Activated B cell treated with CpG ODN at 0.5 μM for 24 hours (primary cell): ENCODE measurements at regions of chr10 and their contacts with region 1.

Region 1: DNA sequence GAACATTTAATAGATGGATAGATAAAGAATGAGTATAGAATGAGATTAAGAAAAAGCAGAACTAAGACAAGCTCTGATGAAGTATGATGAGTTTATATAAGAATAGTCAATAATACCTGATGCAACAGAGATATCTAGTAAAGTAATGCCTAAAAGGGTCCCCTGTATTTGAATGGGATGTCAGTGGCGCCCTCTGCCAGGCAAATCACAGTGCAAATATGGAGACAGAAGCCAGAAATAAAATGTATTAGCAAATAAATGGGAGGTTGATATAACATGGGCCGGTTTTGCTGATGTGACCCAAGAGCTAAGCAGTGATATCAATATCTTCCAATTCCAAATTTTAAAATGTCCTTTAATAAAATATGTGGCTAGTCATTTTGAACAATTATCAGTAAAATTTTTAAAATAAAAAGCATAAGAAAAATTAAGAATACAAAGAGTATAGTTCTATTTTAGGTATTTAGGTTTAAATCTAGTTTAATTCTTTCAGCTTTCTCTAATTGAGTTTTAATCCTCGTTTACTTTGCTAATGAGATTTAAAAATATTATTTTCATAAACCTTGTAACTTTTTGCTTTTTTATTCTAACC is 62.6 kb downstream of the ADK start:
- DNase-seq: no peak
- ATAC-seq: peak; percentile 77
- H3K4me3 Mint-ChIP-seq: no peak overlapping the region
- H3K27ac Mint-ChIP-seq: peak overlapping the region; percentile 67
- H3K4me1 Mint-ChIP-seq: peaks cover 31% of the 10 kb centered on the region
- H3K27me3 Mint-ChIP-seq: no peaks in the 10 kb centered on the region
- CTCF ChIP-seq: no peak

Region 2: GRCh38 chr10:74118804-74119203 is 94.9 kb before region 1 on chr10:
- CTCF ChIA-PET with region 1: interaction called, 10 read pairs
- POLR2A ChIA-PET with region 1: no interaction called
- intact Hi-C with region 1: no loop called
- DNase-seq: no peak
- ATAC-seq: no peak
- H3K4me3 Mint-ChIP-seq: no peak overlapping the region
- H3K27ac Mint-ChIP-seq: peak overlapping the region; percentile 71
- H3K4me1 Mint-ChIP-seq: peaks cover 5% of the 10 kb centered on the region
- H3K27me3 Mint-ChIP-seq: no peaks in the 10 kb centered on the region
- CTCF ChIP-seq: no peak

Region 3: DNA sequence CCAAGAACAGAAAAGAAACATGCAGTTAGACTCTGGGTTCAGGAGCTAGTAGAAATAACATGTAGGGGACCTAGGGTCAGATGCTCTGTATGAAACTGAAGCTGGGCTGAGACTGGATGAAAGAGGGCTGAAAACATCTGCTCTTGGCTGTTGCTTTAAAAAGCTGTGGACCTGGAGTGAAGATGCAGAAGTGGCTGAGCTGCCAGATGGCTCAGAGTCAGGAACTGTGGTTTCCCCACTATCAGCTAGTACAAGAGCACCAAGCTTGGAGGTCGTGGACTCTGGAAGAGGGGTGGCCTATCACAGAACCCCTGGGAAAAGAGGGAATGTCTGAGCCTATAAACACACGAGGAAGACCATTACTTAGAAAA is 56.8 kb before region 1 on chr10:
- CTCF ChIA-PET with region 1: interaction called, 11 read pairs
- POLR2A ChIA-PET with region 1: no interaction called
- intact Hi-C with region 1: no loop called
- DNase-seq: no peak
- ATAC-seq: peak; percentile 67
- H3K4me3 Mint-ChIP-seq: no peak overlapping the region
- H3K27ac Mint-ChIP-seq: peak overlapping the region; percentile 85
- H3K4me1 Mint-ChIP-seq: peaks cover 82% of the 10 kb centered on the region
- H3K27me3 Mint-ChIP-seq: no peaks in the 10 kb centered on the region
- CTCF ChIP-seq: no peak